ENCODE measurements at regions of chr20 and their contacts with region 1.

Region 1: GRCh38 chr20:24289737-24290481 is 179.5 kb upstream of the SYNDIG1 start:
- DNase-seq: no peak
- H3K4me3 ChIP-seq: no peak overlapping the region
- H3K27ac ChIP-seq: no peak overlapping the region
- H3K4me1 ChIP-seq: no peaks in the 10 kb centered on the region
- H3K27me3 ChIP-seq: no peaks in the 10 kb centered on the region
- CTCF ChIP-seq: no peak
- EP300 ChIP-seq: no peak
- POLR2A ChIP-seq: no peak

Region 2: GRCh38 chr20:24359321-24360027 is 69.6 kb after region 1 on chr20:
- intact Hi-C with region 1: loop called in 1 of 4 experiments (anchors 2 kb)
- DNase-seq: no peak
- H3K4me3 ChIP-seq: no peak overlapping the region
- H3K27ac ChIP-seq: no peak overlapping the region
- H3K4me1 ChIP-seq: no peaks in the 10 kb centered on the region
- H3K27me3 ChIP-seq: no peaks in the 10 kb centered on the region
- CTCF ChIP-seq: no peak
- EP300 ChIP-seq: no peak
- POLR2A ChIP-seq: no peak

Measured in ovary (tissue), 10 donors.